Pancreas (tissue), 10 donors: ENCODE measurements at regions of chr2 and their contacts with region 1.

Region 1: GRCh38 chr2:47323009-47323821 is 79.7 kb upstream of the MSH2 start:
- DNase-seq: peak; percentile 51 to 84 (median 75)
- ATAC-seq: peak; percentile 93 to 99 (median 98)
- H3K4me3 ChIP-seq: no peak overlapping the region
- H3K27ac ChIP-seq: no peak overlapping the region
- H3K4me1 ChIP-seq: peaks cover 0 to 3% (median 3%) of the 10 kb centered on the region in 3 donors
- H3K27me3 ChIP-seq: no peaks in the 10 kb centered on the region
- CTCF ChIP-seq: peak; percentile 88 to 97 (median 94)

Region 2: DNA sequence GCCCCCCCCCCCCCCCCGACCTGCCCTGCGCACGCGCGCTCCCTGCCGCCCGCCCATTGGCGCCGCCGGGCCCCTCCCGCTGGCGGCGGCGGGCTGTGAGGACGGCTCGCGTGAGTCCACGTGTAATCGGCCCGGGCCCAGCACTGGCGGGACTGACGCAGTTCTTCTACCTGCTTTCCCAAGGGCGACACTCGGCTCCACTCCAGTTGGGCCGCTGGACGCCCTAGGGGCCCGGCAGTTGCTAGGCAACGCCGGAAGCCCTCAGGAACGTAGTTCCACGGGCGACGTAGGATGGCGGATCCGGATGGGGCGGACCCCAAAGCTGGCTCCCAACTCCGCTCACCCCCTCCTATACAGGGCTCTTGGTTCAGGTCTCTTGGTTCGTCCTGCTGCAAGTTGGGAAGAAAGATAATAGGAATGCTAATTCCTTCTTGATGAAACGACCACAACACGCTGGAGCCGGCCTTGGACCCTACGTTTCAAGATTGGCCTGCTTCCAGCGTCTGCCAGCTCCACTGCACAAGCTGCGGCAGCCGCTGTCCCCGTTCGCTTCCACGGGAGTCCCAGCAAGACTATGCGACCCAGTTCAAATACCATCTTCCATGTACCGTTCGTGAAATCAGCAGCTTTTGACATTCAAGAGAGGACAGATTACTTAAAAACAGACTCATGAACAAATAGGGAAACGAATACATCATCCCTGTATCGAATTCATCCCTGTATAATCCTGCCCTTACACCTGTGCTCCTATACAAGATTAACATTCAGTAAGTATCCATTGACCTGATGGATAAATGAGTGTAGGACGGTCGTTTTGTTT is 407.2 kb before region 1 on chr2:
- intact Hi-C with region 1: loop called in 1 of 3 experiments (anchors 10 kb)
- DNase-seq: peak; percentile 94 to 100 (median 99)
- ATAC-seq: peak; percentile 83 to 91 (median 86)
- H3K4me3 ChIP-seq: peak overlapping the region; percentile 89 to 100 (median 96)
- H3K27ac ChIP-seq: peak overlapping the region; percentile 97 to 98 (median 98)
- H3K4me1 ChIP-seq: peaks cover 0 to 23% (median 18%) of the 10 kb centered on the region in 3 donors
- H3K27me3 ChIP-seq: no peaks in the 10 kb centered on the region
- CTCF ChIP-seq: no peak

Region 3: DNA sequence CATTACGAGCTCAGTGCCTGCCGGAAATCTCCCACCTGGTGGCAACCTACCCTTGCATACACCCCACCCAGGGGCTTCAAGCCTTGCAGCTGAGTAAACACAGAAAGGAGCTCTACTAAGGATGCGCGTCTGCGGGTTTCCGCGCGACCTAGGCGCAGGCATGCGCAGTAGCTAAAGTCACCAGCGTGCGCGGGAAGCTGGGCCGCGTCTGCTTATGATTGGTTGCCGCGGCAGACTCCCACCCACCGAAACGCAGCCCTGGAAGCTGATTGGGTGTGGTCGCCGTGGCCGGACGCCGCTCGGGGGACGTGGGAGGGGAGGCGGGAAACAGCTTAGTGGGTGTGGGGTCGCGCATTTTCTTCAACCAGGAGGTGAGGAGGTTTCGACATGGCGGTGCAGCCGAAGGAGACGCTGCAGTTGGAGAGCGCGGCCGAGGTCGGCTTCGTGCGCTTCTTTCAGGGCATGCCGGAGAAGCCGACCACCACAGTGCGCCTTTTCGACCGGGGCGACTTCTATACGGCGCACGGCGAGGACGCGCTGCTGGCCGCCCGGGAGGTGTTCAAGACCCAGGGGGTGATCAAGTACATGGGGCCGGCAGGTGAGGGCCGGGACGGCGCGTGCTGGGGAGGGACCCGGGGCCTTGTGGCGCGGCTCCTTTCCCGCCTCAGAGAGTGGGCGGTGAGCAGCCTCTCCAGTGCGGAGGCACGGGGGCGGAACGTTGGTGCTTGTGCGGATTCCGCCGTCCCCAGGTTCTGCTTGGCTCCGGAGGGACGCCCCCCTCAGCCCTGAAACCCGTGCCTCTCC is 79.8 kb after region 1 on chr2 and contains the start of gene MSH2:
- intact Hi-C with region 1: no loop called
- DNase-seq: peak; percentile 88 to 97 (median 90)
- ATAC-seq: peak; percentile 98 to 99 (median 98)
- H3K4me3 ChIP-seq: peak within 1 kb of the TSS; percentile 72 to 97 (median 84)
- H3K27ac ChIP-seq: peak within 1 kb of the TSS; percentile 36 to 72 (median 62)
- H3K4me1 ChIP-seq: peaks cover 0 to 11% (median 0%) of the 10 kb centered on the region in 3 donors
- H3K27me3 ChIP-seq: no peaks in the 10 kb centered on the region
- CTCF ChIP-seq: no peak
- total RNA-seq, gene MSH2: 5.1 to 10.3 (median 8.2) TPM